ENCODE measurements at regions of chr4 and their contacts with region 1.

Region 1: DNA sequence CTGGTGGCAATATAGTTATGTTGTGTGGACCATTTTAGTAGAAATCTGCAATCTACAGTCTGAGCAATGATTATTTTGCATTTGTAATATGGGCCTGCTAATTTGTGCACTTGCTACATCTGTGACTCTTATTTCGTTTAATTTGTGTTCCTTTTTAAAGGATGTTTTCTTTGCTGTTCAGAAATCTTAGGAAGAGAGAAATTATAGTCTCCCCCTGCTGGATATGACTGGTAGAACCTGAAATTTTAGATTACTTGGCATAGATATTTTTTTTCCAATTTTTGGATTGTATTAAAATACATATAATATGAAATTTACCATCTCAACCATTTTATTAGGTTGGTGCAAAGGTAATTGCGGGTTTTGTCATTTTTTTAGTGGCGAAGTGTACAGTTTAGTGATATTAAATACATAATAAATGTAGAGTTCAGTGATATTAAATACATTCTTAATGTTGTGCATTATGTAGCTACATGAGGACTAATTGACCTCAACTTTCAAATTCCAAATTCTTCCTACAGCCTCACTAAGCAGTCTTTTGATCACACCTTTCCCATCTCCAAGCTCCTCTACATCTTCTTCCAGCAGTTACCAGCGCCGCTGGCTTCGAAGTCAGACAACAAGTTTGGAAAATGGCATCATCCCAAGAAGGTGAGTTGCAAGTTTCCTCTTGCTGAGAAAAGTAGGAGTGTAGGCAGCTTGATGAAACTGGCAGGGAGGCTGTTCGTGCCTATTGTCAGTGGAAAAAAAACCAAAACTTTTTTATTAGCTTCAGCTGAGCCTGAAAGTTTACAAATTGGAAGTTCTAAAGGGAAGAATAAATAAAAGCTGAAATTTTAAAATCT is 82.2 kb downstream of the FNIP2 start:
- DNase-seq: no peak
- ATAC-seq: peak; percentile 35; the same call in 1 of the 3 replicates
- H3K4me3 ChIP-seq: no peak overlapping the region
- H3K27ac ChIP-seq: no peak overlapping the region
- H3K4me1 ChIP-seq: no peaks in the 10 kb centered on the region
- H3K27me3 ChIP-seq: no peaks in the 10 kb centered on the region; a peak in 1 of 4 replicates
- CTCF ChIP-seq: peak; percentile 49 to 55 (median 53); a peak in 5 of 6 replicates
- EP300 ChIP-seq: no peak
- POLR2A ChIP-seq: no peak
- RAD21 ChIP-seq: peak; percentile 50

Region 2: GRCh38 chr4:158302076-158302866 is 548.8 kb before region 1 on chr4:
- CTCF ChIA-PET with region 1: no interaction called
- POLR2A ChIA-PET with region 1: no interaction called
- RAD21 ChIA-PET with region 1: no interaction called
- SMC1A ChIA-PET with region 1: no interaction called
- in situ Hi-C with region 1: no loop called
- intact Hi-C with region 1: no loop called
- DNase-seq: no peak
- ATAC-seq: no peak
- H3K4me3 ChIP-seq: no peak overlapping the region
- H3K27ac ChIP-seq: no peak overlapping the region
- H3K4me1 ChIP-seq: no peaks in the 10 kb centered on the region
- H3K27me3 ChIP-seq: no peaks in the 10 kb centered on the region; a peak in 1 of 4 replicates
- CTCF ChIP-seq: no peak
- EP300 ChIP-seq: no peak
- POLR2A ChIP-seq: no peak
- RAD21 ChIP-seq: no peak

Region 3: GRCh38 chr4:158729716-158730559 is 121.1 kb before region 1 on chr4:
- CTCF ChIA-PET with region 1: interaction called, 61 read pairs
- POLR2A ChIA-PET with region 1: interaction called, 3 read pairs
- RAD21 ChIA-PET with region 1: interaction called, 30 read pairs
- SMC1A ChIA-PET with region 1: interaction called, 24 read pairs
- in situ Hi-C with region 1: loop called (anchors 5 kb)
- intact Hi-C with region 1: loop called (anchors 1 kb)
- DNase-seq: peak; percentile 44
- ATAC-seq: peak; percentile 97
- H3K4me3 ChIP-seq: no peak overlapping the region
- H3K27ac ChIP-seq: no peak overlapping the region
- H3K4me1 ChIP-seq: no peaks in the 10 kb centered on the region
- H3K27me3 ChIP-seq: peaks cover 0 to 2% of the 10 kb centered on the region in 2 experiments; a peak in 1 of 4 replicates
- CTCF ChIP-seq: peak; percentile 81 to 97 (median 85)
- EP300 ChIP-seq: no peak
- POLR2A ChIP-seq: no peak
- RAD21 ChIP-seq: peak; percentile 85

Region 4: GRCh38 chr4:158809611-158810486 is 41.2 kb before region 1 on chr4:
- CTCF ChIA-PET with region 1: interaction called, 22 read pairs
- POLR2A ChIA-PET with region 1: interaction called, 3 read pairs
- RAD21 ChIA-PET with region 1: interaction called, 39 read pairs
- SMC1A ChIA-PET with region 1: interaction called, 34 read pairs
- in situ Hi-C with region 1: no loop called
- intact Hi-C with region 1: no loop called
- DNase-seq: peak; percentile 89
- ATAC-seq: peak; percentile 91
- H3K4me3 ChIP-seq: no peak overlapping the region; the same call in 1 of the 2 replicates
- H3K27ac ChIP-seq: peak overlapping the region; percentile 43
- H3K4me1 ChIP-seq: peaks cover 30% of the 10 kb centered on the region
- H3K27me3 ChIP-seq: no peaks in the 10 kb centered on the region; a peak in 1 of 4 replicates
- CTCF ChIP-seq: no peak
- EP300 ChIP-seq: peak; percentile 84 to 89
- POLR2A ChIP-seq: no peak
- RAD21 ChIP-seq: no peak

Region 5: GRCh38 chr4:158837527-158838141 is 13.4 kb before region 1 on chr4:
- CTCF ChIA-PET with region 1: interaction called, 11 read pairs
- POLR2A ChIA-PET with region 1: no interaction called
- RAD21 ChIA-PET with region 1: interaction called, 14 read pairs
- SMC1A ChIA-PET with region 1: interaction called, 24 read pairs
- in situ Hi-C with region 1: no loop called
- intact Hi-C with region 1: no loop called
- DNase-seq: no peak
- ATAC-seq: no peak
- H3K4me3 ChIP-seq: no peak overlapping the region
- H3K27ac ChIP-seq: no peak overlapping the region
- H3K4me1 ChIP-seq: no peaks in the 10 kb centered on the region
- H3K27me3 ChIP-seq: no peaks in the 10 kb centered on the region
- CTCF ChIP-seq: no peak
- EP300 ChIP-seq: no peak
- POLR2A ChIP-seq: no peak
- RAD21 ChIP-seq: no peak

Region 6: GRCh38 chr4:159191989-159192388 is 341.0 kb after region 1 on chr4:
- CTCF ChIA-PET with region 1: interaction called, 153 read pairs
- POLR2A ChIA-PET with region 1: no interaction called
- RAD21 ChIA-PET with region 1: interaction called, 4 read pairs
- SMC1A ChIA-PET with region 1: interaction called, 4 read pairs
- in situ Hi-C with region 1: no loop called
- intact Hi-C with region 1: no loop called
- DNase-seq: no peak
- ATAC-seq: no peak
- H3K4me3 ChIP-seq: no peak overlapping the region
- H3K27ac ChIP-seq: no peak overlapping the region
- H3K4me1 ChIP-seq: no peaks in the 10 kb centered on the region
- H3K27me3 ChIP-seq: no peaks in the 10 kb centered on the region
- CTCF ChIP-seq: peak; percentile 19 to 32 (median 31); a peak in 4 of 6 replicates
- EP300 ChIP-seq: no peak
- POLR2A ChIP-seq: no peak
- RAD21 ChIP-seq: peak; percentile 34

Region 7: GRCh38 chr4:159352609-159353008 is 501.6 kb after region 1 on chr4:
- CTCF ChIA-PET with region 1: no interaction called
- POLR2A ChIA-PET with region 1: no interaction called
- RAD21 ChIA-PET with region 1: no interaction called
- SMC1A ChIA-PET with region 1: no interaction called
- in situ Hi-C with region 1: no loop called
- intact Hi-C with region 1: no loop called
- DNase-seq: no peak
- ATAC-seq: no peak
- H3K4me3 ChIP-seq: no peak overlapping the region
- H3K27ac ChIP-seq: no peak overlapping the region
- H3K4me1 ChIP-seq: no peaks in the 10 kb centered on the region
- H3K27me3 ChIP-seq: no peaks in the 10 kb centered on the region
- CTCF ChIP-seq: no peak
- EP300 ChIP-seq: no peak
- POLR2A ChIP-seq: no peak
- RAD21 ChIP-seq: no peak

Measured in GM12878 (cell line).